Panc1 (cell line): ENCODE measurements at regions of chr3 and their contacts with region 1.

Region 1: DNA sequence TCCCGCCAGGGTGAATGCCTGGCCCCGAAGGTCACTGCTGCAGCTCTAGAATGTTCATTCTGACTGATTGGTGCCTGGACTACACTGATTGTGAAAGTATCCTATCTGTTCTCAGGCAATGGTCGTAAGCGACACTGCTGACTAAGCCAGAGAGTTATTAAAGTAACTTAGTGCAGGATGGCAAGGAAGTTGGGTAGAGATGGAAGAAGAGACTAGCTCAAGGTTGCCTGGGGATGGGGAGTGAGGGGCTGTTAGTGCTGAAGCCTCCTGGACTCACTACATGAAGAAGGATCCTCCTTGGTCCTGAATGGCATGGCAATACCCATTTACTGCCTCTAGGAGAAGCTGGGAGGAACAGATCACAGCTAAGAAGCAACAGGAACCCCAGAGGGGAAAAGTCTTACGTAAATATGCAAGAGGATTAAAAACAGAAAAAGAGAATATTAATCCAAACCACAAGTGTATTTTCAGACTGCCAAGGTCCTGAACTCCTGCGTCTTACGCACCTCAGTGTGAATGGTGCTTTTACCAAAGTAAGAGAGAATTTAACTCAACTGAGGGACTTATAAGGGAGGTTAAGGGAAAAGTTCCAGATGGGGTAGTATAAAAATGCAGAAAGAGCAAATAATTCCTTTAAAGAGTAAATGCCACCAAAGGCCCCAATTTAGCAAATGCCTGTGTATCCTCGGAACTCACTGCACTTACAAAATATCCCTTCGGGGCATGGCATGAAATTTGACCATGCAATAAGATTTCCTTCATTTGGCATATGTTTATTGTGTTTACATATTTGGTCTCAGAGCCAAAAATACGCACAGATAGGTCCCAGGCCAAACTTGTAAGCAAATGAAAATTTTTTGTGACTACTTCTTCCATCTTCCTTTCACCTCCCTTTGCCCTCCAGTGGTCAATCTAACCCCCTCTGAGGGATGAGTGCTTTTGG is 64.0 kb upstream of the DGKG start:
- DNase-seq: no peak
- ATAC-seq: peak; percentile 60; the same call in 1 of the 2 replicates
- H3K4me3 ChIP-seq: no peak overlapping the region
- H3K27ac ChIP-seq: no peak overlapping the region
- H3K4me1 ChIP-seq: no peaks in the 10 kb centered on the region
- H3K27me3 ChIP-seq: peaks cover 12% of the 10 kb centered on the region
- CTCF ChIP-seq: peak; percentile 23; the same call in 1 of the 2 replicates

Region 2: DNA sequence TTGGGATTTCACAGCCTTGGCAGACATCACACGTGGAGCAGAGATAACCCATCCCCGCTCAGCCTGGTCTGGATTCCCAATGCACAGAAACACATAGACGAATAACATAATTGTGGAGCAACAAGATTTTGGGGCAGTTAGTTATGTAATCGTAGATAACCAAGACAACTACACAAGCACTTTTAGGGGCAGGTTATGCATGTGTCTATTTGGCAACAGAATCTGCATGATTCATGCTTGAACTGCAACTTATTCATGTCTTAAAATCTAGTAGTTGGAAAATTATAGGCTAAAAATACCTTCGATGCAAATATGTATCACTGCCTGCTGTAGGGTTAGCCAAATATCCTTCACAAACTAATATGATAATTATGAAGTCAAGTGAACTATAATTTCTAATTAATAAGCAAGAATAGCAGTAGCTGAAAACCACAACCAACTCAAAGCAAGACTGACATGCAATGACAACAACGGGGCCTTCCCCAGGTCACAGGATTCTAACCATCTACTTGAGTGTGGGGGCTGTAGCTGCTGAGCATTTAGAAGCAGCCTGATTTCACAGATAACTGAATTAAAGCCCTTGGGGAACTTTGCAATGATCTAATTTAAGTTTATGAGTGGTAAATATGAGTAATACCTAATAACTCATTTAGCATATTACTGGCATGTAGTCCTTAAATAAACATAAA is 95.1 kb before region 1 on chr3:
- CTCF ChIA-PET with region 1: no interaction called
- POLR2A ChIA-PET with region 1: no interaction called
- in situ Hi-C with region 1: no loop called
- intact Hi-C with region 1: no loop called
- DNase-seq: no peak
- ATAC-seq: no peak
- H3K4me3 ChIP-seq: no peak overlapping the region
- H3K27ac ChIP-seq: no peak overlapping the region
- H3K4me1 ChIP-seq: no peaks in the 10 kb centered on the region
- H3K27me3 ChIP-seq: peaks cover 33% of the 10 kb centered on the region
- CTCF ChIP-seq: no peak

Region 3: DNA sequence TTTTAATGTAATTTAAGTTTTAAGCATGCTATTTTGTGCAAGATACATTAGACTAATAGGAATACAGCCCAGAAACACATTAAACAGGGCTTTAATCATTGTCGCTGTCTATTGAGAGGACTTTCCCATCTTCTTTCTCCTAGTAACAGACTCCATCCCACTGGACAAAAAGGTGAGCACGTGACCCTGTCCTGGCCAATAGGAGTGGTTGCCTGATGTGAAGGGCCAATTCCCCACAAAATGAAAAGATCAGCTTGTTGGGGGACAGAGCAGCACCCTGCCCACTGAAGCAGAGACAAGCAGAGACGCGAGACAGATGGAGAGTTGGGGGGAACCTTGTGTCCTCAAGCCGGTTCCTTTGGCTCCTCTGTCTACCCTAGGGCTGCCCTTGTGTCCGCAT is 97.0 kb after region 1 on chr3:
- CTCF ChIA-PET with region 1: interaction called, 11 read pairs
- POLR2A ChIA-PET with region 1: no interaction called
- in situ Hi-C with region 1: no loop called
- intact Hi-C with region 1: no loop called
- DNase-seq: no peak
- ATAC-seq: no peak
- H3K4me3 ChIP-seq: no peak overlapping the region
- H3K27ac ChIP-seq: no peak overlapping the region
- H3K4me1 ChIP-seq: no peaks in the 10 kb centered on the region
- H3K27me3 ChIP-seq: peaks cover 17% of the 10 kb centered on the region
- CTCF ChIP-seq: no peak